ENCODE measurements at regions of chr15 and their contacts with region 1.

Region 1: DNA sequence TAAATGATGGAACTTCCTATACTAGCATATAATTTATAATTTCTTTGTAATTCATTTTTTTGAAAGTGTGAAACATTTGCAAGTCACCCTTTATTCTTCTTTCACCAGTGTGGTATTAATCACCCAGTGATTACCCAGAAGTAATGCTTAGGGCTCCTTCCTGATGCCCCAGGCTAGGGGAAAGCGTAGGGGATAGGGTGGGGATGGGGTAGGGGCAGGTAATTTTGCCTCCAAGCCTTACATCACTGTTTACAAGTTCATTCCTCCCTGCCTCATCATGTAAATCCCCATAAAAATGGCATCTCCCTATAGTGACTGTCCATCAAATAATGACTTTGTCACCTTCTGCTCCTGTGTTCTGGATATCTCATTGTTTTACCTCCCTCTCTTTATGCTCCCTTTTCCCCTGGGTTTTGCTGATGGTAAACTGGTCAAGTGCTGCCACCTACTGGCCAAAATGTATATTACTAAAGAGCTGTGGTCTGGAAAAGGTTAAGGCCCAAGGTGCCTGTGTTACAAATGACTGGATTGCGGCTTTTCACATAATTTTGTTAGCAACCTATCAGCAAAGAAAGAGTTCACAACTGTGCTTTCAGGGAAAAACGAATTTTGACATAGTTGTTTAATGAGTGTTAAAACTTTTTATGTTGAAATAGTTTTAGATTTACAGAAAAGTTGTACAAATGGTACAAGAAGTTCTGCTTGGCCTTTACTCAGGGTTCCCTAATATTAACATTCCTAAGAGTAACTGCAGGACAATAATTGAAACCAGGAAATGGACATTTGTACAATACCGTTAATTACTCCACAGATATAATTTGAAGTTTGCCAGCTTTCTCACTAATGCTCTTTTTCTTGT is 54.7 kb downstream of the ONECUT1 start:
- DNase-seq: no peak
- H3K4me3 ChIP-seq: no peak overlapping the region
- H3K27ac ChIP-seq: no peak overlapping the region
- H3K4me1 ChIP-seq: peaks cover 31% of the 10 kb centered on the region
- H3K27me3 ChIP-seq: peaks cover 13% of the 10 kb centered on the region
- CTCF ChIP-seq: peak; percentile 83

Region 2: GRCh38 chr15:52256366-52256765 is 479.1 kb before region 1 on chr15:
- intact Hi-C with region 1: loop called (anchors 5 kb)
- DNase-seq: peak; percentile 46
- H3K4me3 ChIP-seq: peak overlapping the region; percentile 29
- H3K27ac ChIP-seq: no peak overlapping the region
- H3K4me1 ChIP-seq: peaks cover 22% of the 10 kb centered on the region
- H3K27me3 ChIP-seq: no peaks in the 10 kb centered on the region
- CTCF ChIP-seq: peak; percentile 82

Region 3: GRCh38 chr15:52658955-52659354 is 76.5 kb before region 1 on chr15:
- intact Hi-C with region 1: no loop called
- DNase-seq: no peak
- H3K4me3 ChIP-seq: no peak overlapping the region
- H3K27ac ChIP-seq: peak overlapping the region; percentile 73
- H3K4me1 ChIP-seq: peaks cover 69% of the 10 kb centered on the region
- H3K27me3 ChIP-seq: no peaks in the 10 kb centered on the region
- CTCF ChIP-seq: no peak

Region 4: DNA sequence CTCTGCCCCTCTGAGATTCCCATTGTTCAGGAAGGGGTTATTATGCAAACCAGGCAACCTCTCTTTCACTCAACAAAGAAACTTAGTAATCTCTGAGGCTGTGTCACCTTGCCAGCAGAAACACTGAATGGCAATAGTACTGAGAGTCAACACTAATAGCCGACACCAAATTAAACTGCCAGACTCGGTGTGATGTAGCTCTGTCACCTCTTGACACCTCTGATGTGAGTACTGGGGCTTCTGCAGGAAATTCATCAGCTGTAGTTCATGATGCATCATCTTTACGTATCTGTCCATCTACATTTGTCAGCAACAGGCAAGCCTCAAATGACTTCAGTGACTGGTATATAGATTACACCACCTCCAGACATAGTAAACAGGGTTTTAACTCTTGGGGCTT is 119.7 kb after region 1 on chr15:
- intact Hi-C with region 1: no loop called
- DNase-seq: no peak
- H3K4me3 ChIP-seq: no peak overlapping the region
- H3K27ac ChIP-seq: no peak overlapping the region
- H3K4me1 ChIP-seq: peaks cover 12% of the 10 kb centered on the region
- H3K27me3 ChIP-seq: peaks cover 25% of the 10 kb centered on the region
- CTCF ChIP-seq: no peak

Region 5: DNA sequence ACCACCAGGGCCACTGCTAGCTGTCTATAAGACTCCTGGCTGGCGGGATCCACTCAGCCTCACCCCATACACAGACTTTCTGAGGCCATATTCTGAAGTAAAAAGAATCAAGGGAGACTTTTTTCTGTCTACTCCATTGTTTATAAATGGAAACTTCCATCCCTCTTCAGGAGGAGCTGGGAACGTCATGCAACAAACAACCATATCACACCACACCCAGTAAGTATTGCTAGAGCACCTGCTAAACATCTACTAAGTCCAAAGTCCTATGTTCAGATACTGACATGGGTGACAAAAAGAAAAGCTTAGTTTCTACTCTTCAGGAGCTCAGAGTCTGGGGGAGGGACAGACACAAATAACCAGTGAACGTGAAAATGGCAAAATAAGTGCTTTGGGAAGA is 379.5 kb after region 1 on chr15:
- intact Hi-C with region 1: no loop called
- DNase-seq: no peak
- H3K4me3 ChIP-seq: no peak overlapping the region
- H3K27ac ChIP-seq: no peak overlapping the region
- H3K4me1 ChIP-seq: no peaks in the 10 kb centered on the region
- H3K27me3 ChIP-seq: no peaks in the 10 kb centered on the region
- CTCF ChIP-seq: no peak

Measured in left ventricle myocardium inferior (tissue), 1 donor.